ENCODE measurements at regions of chr11 and their contacts with region 1.

Region 1: GRCh38 chr11:133082851-133083488 is 449.3 kb downstream of the OPCML start:
- DNase-seq: peak; percentile 73
- ATAC-seq: peak; percentile 95 to 97

Region 2: DNA sequence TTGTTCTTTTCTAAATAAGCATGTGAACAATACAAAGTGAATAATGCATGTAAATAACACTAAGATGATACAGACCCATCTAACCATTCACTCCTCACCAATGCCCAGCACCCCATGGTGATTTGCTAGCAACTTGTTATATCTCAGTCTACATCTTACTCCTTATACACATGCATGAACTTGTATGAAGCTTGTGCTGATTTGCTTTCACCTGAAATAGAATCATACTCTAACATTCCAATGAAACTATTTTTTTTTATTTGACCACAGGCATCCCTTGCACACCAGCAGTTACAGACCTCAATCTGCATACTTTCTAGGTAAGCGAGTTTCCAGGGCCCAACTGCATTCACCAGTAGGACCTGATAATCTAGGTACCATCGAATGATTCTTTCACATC is 424.3 kb before region 1 on chr11:
- intact Hi-C with region 1: no loop called
- DNase-seq: no peak
- ATAC-seq: no peak

Region 3: GRCh38 chr11:133153031-133153430 is 70.1 kb after region 1 on chr11:
- intact Hi-C with region 1: no loop called
- DNase-seq: no peak
- ATAC-seq: peak; percentile 50 to 57

Region 4: DNA sequence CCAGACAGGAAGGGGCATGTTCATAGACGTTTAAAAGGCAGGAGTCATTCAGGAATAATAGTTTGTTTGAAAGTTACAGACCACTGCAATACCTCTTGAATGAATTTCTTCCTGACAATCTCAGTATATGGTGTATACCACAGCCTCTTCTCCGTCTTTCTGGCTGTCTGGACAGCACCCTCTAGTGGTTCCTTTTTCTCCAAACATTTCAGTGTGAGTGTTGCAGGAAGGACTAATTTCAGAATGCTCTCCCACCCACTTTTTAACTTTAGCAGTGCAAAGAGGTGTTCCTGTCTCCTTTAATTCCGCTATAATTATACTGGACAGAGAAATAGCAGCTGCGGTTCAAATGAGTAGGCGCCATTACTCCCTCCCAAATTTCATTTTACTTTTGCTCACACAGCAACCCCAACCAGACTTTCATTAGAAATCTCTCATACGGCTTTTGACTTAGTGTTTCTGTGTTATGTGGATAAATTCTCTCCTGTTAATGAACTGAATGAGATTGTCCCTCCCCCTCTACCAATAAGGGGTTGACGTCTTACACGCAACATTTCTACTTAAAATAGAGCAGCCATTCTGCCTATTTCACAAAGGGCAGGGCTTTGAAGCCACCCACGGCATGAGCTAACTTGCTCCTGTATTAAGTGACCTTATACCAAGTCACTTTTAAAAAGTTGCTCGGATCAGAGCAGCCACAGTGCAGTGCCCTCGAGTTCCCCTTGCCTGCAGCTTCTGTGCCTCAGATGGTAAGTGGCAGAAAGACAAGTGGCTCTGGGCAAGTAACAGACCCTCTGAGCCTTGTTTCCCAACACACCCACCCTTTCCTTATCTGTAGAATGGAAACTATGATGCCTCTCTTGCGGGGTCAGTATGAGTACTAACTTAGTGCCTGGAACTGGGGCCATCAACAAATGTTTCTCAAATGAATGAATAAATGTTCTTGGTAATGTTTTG is 80.8 kb after region 1 on chr11:
- intact Hi-C with region 1: loop called (anchors 5 kb)
- DNase-seq: no peak
- ATAC-seq: peak; percentile 63 to 81

Region 5: GRCh38 chr11:133834682-133835592 is 752.0 kb after region 1 on chr11:
- intact Hi-C with region 1: loop called (anchors 2 to 5 kb)
- DNase-seq: peak; percentile 44
- ATAC-seq: peak; percentile 63 to 82

Region 6: GRCh38 chr11:133872160-133872559 is 789.2 kb after region 1 on chr11:
- intact Hi-C with region 1: no loop called
- DNase-seq: no peak
- ATAC-seq: no peak